ENCODE measurements at regions of chr4 and their contacts with region 1.

Region 1: DNA sequence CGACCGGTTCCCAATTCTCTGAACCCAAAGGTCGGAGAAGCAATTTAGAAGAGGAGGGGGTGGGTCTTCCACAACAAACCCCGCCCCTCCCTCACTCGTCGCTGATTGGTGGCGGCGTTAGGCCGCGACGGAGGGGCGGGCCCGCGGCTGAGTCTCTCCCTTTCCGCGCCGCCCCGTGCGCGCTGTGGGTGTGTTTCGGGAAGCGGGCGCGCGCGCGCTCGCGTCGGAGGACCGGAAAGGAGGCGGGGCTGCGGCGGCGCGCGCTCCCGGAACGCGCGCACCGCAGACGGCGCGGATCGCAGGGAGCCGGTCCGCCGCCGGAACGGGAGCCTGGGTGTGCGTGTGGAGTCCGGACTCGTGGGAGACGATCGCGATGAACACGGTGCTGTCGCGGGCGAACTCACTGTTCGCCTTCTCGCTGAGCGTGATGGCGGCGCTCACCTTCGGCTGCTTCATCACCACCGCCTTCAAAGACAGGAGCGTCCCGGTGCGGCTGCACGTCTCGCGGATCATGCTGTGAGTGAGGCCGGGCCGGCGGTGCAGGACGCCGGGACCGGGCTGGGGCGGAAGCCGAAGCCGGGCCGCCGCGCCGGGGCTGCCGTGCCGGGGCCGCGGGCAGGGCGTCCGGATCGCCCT is at the start of gene SPCS3:
- DNase-seq: peak; percentile 96 to 98 (median 97)
- ATAC-seq: peak; percentile 99 to 100 (median 99)
- H3K4me3 ChIP-seq: peak within 1 kb of the TSS; percentile 73 to 95 (median 85)
- H3K27ac ChIP-seq: peak within 1 kb of the TSS; percentile 88 to 100 (median 97)
- H3K4me1 ChIP-seq: peaks cover 0 to 49% (median 36%) of the 10 kb centered on the region in 12 donors
- H3K27me3 ChIP-seq: no peaks in the 10 kb centered on the region
- CTCF ChIP-seq: no peak
- POLR2A ChIP-seq: peak; percentile 49 to 91
- total RNA-seq, gene SPCS3: 40.6 to 200 (median 81.6) TPM

Region 2: GRCh38 chr4:176195184-176195978 is 124.4 kb before region 1 on chr4 and contains the start of gene SPATA4:
- intact Hi-C with region 1: loop called in 5 of 10 experiments (anchors 1 to 10 kb)
- DNase-seq: peak; percentile 94 to 97 (median 96)
- ATAC-seq: peak; percentile 99 to 100 (median 100)
- H3K4me3 ChIP-seq: peak within 1 kb of the TSS; percentile 15 to 82 (median 64)
- H3K27ac ChIP-seq: peak within 1 kb of the TSS; percentile 23 to 90 (median 81)
- H3K4me1 ChIP-seq: peaks cover 0 to 10% (median 2%) of the 10 kb centered on the region in 12 donors
- H3K27me3 ChIP-seq: peaks cover 0 to 13% (median 0%) of the 10 kb centered on the region in 9 donors
- CTCF ChIP-seq: no peak
- POLR2A ChIP-seq: peak; percentile 25 to 75
- total RNA-seq, gene SPATA4: 0.25 to 0.84 (median 0.64) TPM in 5 of 9 donors, not detected in the others

Region 3: GRCh38 chr4:176238157-176238610 is 81.6 kb before region 1 on chr4:
- intact Hi-C with region 1: loop called in 2 of 10 experiments (anchors 5 to 10 kb)
- DNase-seq: no peak
- ATAC-seq: peak; percentile 74 to 89 (median 82)
- H3K4me3 ChIP-seq: peak overlapping the region in 6 of 12 donors; percentile 6 to 15 (median 8)
- H3K27ac ChIP-seq: peak overlapping the region; percentile 71 to 94 (median 84)
- H3K4me1 ChIP-seq: peaks cover 0 to 25% (median 7%) of the 10 kb centered on the region in 12 donors
- H3K27me3 ChIP-seq: no peaks in the 10 kb centered on the region
- CTCF ChIP-seq: no peak
- POLR2A ChIP-seq: no peak

Region 4: GRCh38 chr4:176340871-176341685 is 21.3 kb after region 1 on chr4:
- intact Hi-C with region 1: loop called in 1 of 10 experiments (anchors 2 kb)
- DNase-seq: peak in 1 of 5 donors; percentile 20
- ATAC-seq: peak in 3 of 4 donors; percentile 42 to 58 (median 55)
- H3K4me3 ChIP-seq: peak overlapping the region in 7 of 12 donors; percentile 27 to 40 (median 33)
- H3K27ac ChIP-seq: no peak overlapping the region
- H3K4me1 ChIP-seq: peaks cover 0 to 16% (median 6%) of the 10 kb centered on the region in 12 donors
- H3K27me3 ChIP-seq: no peaks in the 10 kb centered on the region
- CTCF ChIP-seq: peak; percentile 33 to 79 (median 62)
- POLR2A ChIP-seq: no peak